GM12878 (cell line): ENCODE measurements at regions of chr6 and their contacts with region 1.

Region 1: DNA sequence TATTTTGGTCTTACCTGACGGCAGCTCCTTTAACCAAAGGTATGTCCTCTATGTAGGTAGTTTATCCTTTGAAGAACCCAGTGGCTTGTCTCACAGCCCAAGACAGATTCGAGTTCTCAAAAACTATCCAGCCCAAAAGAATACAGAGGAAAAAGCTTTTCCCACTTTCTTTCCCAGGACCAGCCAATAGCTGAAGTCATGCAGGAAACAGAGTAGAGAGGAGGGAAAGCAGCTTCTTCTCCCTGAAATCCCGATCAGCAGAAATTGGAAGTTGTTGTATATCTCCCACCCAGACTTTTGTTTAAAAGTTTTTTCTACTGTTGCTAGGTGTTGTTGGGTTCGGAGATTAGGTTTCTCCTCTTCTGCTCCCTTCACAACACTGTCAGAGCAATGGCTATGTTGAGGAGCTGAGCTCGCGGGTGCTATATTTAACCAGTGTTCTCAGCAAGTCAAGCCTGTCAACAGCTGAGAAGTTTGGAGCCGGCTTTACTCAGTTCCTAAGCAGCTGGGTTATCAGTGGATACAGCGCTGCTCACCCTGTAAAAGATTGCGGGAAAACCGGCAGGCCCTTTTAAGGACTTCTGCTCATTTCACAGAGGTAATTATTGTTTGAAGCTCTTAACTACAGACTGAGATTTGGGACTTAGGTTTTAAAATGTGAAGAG is at the start of gene FILIP1:
- DNase-seq: no peak
- ATAC-seq: peak; percentile 44
- H3K4me3 ChIP-seq: peak within 1 kb of the TSS; percentile 39; the same call in 1 of the 2 replicates
- H3K27ac ChIP-seq: peak within 1 kb of the TSS; percentile 63
- H3K4me1 ChIP-seq: peaks cover 27% of the 10 kb centered on the region
- H3K27me3 ChIP-seq: no peaks in the 10 kb centered on the region
- CTCF ChIP-seq: no peak
- EP300 ChIP-seq: no peak
- POLR2A ChIP-seq: no peak
- RAD21 ChIP-seq: no peak
- polyA plus RNA-seq, gene FILIP1: 0.23 to 0.33 TPM

Region 2: DNA sequence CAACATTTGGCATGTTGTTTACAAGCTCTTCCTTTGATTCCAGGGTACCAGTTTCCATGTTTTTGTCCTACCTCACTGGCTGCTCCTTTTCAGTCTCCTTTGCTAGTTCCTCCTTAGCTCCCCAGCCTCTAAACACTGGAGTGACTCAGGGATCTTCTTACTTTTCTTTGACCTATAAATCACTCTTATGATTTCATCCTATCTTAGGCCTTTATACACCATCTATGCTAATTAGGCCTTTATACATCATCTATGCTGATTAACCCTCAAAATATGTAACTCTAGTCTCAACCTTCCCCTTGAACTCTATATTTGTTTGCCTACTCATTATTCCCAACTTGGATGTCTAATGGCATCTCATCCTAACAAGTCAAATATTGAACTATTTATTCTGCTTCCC is 218.5 kb before region 1 on chr6:
- CTCF ChIA-PET with region 1: interaction called, 3 read pairs
- POLR2A ChIA-PET with region 1: interaction called, 3 read pairs
- RAD21 ChIA-PET with region 1: interaction called, 8 read pairs
- SMC1A ChIA-PET with region 1: interaction called, 27 read pairs
- in situ Hi-C with region 1: no loop called
- intact Hi-C with region 1: loop called (anchors 5 kb)
- DNase-seq: no peak
- ATAC-seq: no peak
- H3K4me3 ChIP-seq: no peak overlapping the region
- H3K27ac ChIP-seq: no peak overlapping the region
- H3K4me1 ChIP-seq: no peaks in the 10 kb centered on the region
- H3K27me3 ChIP-seq: no peaks in the 10 kb centered on the region
- CTCF ChIP-seq: no peak
- EP300 ChIP-seq: no peak
- POLR2A ChIP-seq: no peak
- RAD21 ChIP-seq: no peak

Region 3: DNA sequence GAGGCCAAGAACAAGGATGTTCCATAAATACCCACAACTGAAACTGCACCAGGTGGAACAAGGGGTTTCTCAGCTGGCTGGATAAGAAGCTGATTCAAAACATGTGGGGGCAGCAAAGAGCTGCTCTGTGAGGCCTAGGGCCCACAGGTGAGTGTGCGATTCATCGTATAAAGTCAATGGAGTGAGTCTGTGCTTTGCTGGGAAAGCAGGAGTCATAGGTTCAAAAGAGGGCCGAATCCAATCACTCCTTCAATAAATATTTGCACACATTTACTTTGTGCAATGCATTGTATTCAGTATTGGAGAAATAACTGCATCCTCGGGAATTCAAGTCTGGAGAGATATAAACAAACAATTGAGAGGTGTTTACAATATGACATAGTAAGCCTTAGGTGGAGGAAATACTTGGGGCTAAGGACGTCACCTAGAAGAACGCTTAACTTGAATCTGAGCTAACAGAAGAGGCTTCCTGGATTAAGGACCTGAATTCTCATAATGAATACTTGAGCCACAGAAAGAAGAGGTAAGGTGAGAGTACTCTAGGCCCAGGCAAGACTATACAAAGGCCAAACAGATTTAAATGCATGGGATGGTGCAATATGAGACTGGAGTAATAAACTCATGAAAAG is 125.3 kb before region 1 on chr6:
- CTCF ChIA-PET with region 1: interaction called, 10 read pairs
- POLR2A ChIA-PET with region 1: no interaction called
- RAD21 ChIA-PET with region 1: interaction called, 25 read pairs
- SMC1A ChIA-PET with region 1: interaction called, 37 read pairs
- in situ Hi-C with region 1: no loop called
- intact Hi-C with region 1: loop called (anchors 10 kb)
- DNase-seq: no peak
- ATAC-seq: peak; percentile 88
- H3K4me3 ChIP-seq: no peak overlapping the region
- H3K27ac ChIP-seq: no peak overlapping the region
- H3K4me1 ChIP-seq: no peaks in the 10 kb centered on the region
- H3K27me3 ChIP-seq: no peaks in the 10 kb centered on the region
- CTCF ChIP-seq: peak; percentile 46 to 56 (median 50); a peak in 5 of 6 replicates
- EP300 ChIP-seq: no peak
- POLR2A ChIP-seq: no peak
- RAD21 ChIP-seq: peak; percentile 69

Region 4: DNA sequence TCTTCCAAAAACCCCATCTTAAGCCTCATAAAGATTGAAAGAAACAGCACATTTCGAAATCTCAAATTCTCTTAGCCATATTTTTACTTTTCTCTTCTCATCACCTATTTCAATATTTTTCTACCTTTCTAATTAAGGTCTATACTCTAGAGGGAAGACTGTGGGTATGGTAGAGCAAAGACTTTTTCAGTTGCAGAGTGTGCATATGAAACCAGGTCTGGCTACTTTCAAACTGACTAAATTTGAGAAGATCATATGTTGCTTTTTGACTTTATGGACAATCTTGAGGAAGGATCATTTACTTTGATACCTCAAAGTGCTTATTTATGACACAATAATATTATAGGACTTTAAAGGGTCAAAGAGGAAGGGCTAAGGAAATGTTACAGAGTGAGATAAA is 20.6 kb before region 1 on chr6:
- CTCF ChIA-PET with region 1: interaction called, 4 read pairs
- POLR2A ChIA-PET with region 1: interaction called, 6 read pairs
- RAD21 ChIA-PET with region 1: interaction called, 8 read pairs
- SMC1A ChIA-PET with region 1: interaction called, 12 read pairs
- in situ Hi-C with region 1: no loop called
- intact Hi-C with region 1: loop called (anchors 2 kb)
- DNase-seq: no peak
- ATAC-seq: peak; percentile 96
- H3K4me3 ChIP-seq: 0 out of 2 replicates have a peak overlapping the region, but pooled peaks have one; percentile 5
- H3K27ac ChIP-seq: no peak overlapping the region
- H3K4me1 ChIP-seq: 0 out of 2 replicates have a peak, but pooled peaks cover 2% of the 10 kb centered on the region
- H3K27me3 ChIP-seq: no peaks in the 10 kb centered on the region
- CTCF ChIP-seq: no peak
- EP300 ChIP-seq: peak in 1 of 2 experiments; percentile 31; a peak in 1 of 4 replicates
- POLR2A ChIP-seq: no peak
- RAD21 ChIP-seq: no peak

Region 5: GRCh38 chr6:75504465-75505228 is 11.1 kb after region 1 on chr6:
- CTCF ChIA-PET with region 1: interaction called, 6 read pairs
- POLR2A ChIA-PET with region 1: interaction called, 6 read pairs
- RAD21 ChIA-PET with region 1: interaction called, 8 read pairs
- SMC1A ChIA-PET with region 1: interaction called, 10 read pairs
- in situ Hi-C with region 1: no loop called
- intact Hi-C with region 1: no loop called
- DNase-seq: no peak
- ATAC-seq: peak; percentile 55
- H3K4me3 ChIP-seq: no peak overlapping the region
- H3K27ac ChIP-seq: no peak overlapping the region
- H3K4me1 ChIP-seq: no peaks in the 10 kb centered on the region
- H3K27me3 ChIP-seq: no peaks in the 10 kb centered on the region
- CTCF ChIP-seq: peak in 1 of 3 experiments; percentile 33; a peak in 2 of 6 replicates
- EP300 ChIP-seq: no peak
- POLR2A ChIP-seq: no peak
- RAD21 ChIP-seq: peak; percentile 42; the same call in 1 of the 2 replicates

Region 6: DNA sequence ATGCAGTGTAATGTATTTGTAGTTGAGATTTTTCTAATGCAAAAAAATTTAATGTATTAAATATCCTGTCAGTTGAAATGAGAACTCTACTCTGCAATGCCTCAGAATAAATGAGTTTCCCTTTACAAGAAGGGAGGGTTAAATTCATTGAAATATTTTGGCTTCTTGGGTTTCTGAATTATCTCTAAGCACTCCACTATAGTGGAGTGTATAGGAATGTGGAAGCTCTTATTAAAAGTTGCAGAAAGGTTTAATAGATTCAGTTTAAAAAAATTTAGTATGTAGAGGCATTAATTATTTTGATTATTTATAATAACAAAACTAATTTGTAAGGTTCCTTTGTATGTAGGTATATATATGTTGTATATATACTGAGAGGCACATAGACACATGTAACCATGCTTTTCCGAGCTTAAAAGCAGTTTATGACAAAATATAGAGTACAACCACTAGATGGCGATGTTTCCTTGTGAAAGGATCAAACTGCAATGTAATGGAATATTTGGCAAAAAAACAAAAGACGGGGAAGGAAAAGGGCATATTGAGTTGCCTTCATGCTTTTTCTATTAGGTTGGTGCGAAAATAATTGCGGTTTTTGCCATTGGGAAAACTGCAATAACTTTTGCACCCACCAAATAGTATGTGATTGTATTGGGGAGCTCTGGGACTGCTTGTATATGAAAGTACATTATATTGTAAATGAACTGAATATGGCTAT is 399.7 kb after region 1 on chr6:
- CTCF ChIA-PET with region 1: no interaction called
- POLR2A ChIA-PET with region 1: no interaction called
- RAD21 ChIA-PET with region 1: no interaction called
- SMC1A ChIA-PET with region 1: no interaction called
- in situ Hi-C with region 1: no loop called
- intact Hi-C with region 1: no loop called
- DNase-seq: peak; percentile 19
- ATAC-seq: peak; percentile 85
- H3K4me3 ChIP-seq: no peak overlapping the region
- H3K27ac ChIP-seq: no peak overlapping the region
- H3K4me1 ChIP-seq: no peaks in the 10 kb centered on the region
- H3K27me3 ChIP-seq: no peaks in the 10 kb centered on the region
- CTCF ChIP-seq: peak; percentile 57 to 65 (median 65)
- EP300 ChIP-seq: no peak
- POLR2A ChIP-seq: no peak
- RAD21 ChIP-seq: peak; percentile 81